ENCODE measurements at regions of chr10 and their contacts with region 1.

Region 1: GRCh38 chr10:31864834-31865518 is 63.7 kb downstream of the ARHGAP12 start:
- DNase-seq: no peak
- ATAC-seq: no peak

Region 2: GRCh38 chr10:31288962-31289361 is 576.0 kb before region 1 on chr10:
- intact Hi-C with region 1: no loop called
- DNase-seq: no peak
- ATAC-seq: no peak

Region 3: DNA sequence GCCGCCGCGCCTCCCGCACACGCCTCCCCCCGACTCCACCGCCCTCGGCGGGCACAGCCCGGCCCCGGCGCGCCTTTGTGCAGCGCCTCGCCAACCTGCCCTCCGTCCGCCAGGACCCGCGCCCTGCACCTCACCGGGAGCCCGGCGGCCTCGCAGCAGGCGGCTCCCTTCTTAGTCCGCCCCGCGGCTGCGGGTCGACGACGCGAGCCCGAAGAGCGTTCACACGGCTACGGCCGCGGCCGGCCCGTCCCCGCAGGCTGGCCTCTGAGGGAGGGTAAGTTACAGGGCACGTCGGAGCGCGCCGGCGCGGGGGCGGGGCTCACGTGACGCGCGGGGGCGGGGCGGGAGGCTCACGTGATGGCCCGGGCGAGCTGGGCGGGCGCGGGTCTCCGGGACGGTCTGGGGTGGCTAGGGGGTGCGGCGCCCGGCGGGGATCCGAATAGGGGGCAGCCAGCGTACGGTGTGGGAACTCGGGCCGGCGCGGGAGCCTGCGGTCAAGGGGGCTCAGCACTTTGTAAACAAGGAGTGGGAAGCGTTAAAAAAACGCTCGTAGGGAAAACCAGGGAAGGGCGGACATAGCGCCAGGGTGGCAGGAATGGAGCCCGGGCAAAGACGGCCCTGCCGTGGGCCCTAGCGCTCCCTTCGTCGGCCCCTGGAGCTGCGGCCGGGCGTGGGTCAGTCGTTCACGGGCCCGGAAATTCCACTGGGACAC is 63.7 kb after region 1 on chr10 and contains the start of gene ARHGAP12:
- intact Hi-C with region 1: loop called (anchors 5 kb)
- DNase-seq: peak; percentile 96
- ATAC-seq: peak; percentile 99
- total RNA-seq, gene ARHGAP12: 21.7 TPM

Region 4: DNA sequence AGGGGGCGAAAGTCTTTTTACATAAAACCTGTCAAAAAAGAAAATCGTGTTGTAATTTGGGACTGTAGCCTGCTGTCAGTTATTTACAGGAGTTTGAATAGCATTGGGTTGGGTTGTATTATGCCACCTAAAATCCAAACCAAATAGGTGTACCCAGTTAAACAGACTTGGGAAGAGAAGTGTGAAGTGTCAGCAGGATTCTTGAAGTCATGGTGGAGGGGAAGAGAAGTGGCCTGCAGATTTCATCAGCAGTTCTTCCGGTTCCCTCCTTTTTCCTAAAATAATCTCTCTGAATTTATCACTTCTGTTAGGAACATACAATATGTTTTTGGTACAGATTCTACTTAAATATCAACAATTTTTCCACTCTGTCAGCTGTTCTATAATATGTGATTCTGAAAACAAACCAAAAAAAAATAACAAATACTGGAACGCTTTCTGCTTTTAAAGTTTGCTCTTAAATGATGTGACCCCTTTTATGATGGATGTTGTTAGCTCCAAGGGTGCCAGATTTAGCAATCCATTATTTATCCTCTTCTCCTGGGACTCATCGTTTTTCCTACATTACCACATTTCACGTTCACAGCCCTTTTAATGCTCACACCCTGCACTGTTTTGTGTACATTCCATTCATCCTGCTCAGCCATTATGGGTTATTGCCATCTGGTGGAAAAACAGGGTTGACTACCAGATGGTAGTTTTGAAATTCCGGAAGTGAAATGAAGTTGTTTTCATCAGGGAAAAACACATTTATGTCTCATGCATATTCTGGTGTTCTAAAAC is 82.4 kb after region 1 on chr10:
- intact Hi-C with region 1: loop called (anchors 5 kb)
- DNase-seq: no peak
- ATAC-seq: peak; percentile 88

Region 5: DNA sequence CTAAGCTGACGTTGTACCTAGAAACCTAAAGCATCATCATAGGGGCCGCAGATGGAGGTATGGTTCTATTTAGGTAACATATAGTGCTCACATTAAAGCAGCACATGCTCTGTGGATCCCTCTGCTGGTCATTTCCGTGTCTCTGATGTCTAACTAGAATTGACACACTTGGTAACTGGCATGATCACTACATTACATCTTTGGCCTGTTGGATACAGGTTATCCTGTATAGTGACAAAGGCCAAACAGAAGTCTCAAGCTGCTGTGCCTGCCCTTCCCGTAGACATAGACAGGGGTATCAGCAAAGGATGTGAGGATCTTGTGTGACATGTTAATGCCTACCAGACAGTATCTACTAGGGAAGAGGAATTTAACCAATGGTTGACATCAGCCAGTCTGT is 140.1 kb after region 1 on chr10:
- intact Hi-C with region 1: loop called (anchors 10 kb)
- DNase-seq: no peak
- ATAC-seq: peak; percentile 66